T-cell (primary cell): ENCODE measurements at regions of chr15 and their contacts with region 1.

Region 1: DNA sequence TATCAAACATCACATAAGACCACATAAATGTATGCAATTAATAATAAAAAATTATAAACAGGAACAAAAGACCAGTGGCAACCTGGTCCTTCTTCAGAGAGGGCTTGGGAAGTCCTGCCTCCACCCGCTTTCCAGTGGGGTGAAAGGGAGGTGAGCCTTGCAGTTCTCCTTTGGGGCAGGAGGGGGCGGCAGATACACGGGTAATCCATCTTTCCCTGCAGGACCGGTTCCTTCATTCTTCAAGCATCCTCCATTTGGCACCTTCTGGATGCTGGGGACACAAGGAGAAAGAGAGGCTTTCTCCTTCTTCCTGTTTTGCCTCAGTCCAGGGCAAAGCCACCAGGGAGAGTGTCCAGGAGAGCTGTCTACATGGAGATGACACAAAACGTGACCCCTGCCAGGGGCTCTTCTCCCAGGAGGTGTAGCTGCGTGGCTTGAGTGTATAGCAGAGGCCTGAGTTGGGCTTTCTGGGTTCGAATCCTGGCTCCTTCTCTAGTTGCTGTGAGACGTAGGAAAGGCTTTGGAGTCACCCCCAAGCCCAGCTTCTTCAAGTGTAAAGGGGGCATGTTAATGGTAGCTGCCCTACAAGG is 23.2 kb downstream of the RPLP1 start:
- DNase-seq: peak; percentile 25 to 82 (median 64)
- ATAC-seq: peak; percentile 73 to 83 (median 80)
- H3K4me3 ChIP-seq: no peak overlapping the region
- H3K4me3 Mint-ChIP-seq: no peak overlapping the region
- H3K27ac ChIP-seq: no peak overlapping the region
- H3K27ac Mint-ChIP-seq: no peak overlapping the region
- H3K4me1 ChIP-seq: peaks cover 0 to 8% of the 10 kb centered on the region in 2 experiments
- H3K4me1 Mint-ChIP-seq: peaks cover 0 to 5% (median 5%) of the 10 kb centered on the region in 3 donors
- H3K27me3 ChIP-seq: peaks cover 0 to 25% of the 10 kb centered on the region in 2 experiments
- H3K27me3 Mint-ChIP-seq: peaks cover 3 to 5% of the 10 kb centered on the region in 2 donors

Region 2: GRCh38 chr15:69031013-69032001 is 444.6 kb before region 1 on chr15:
- CTCF ChIA-PET with region 1: interaction called in 1 of 2 experiments, 14 read pairs
- POLR2A ChIA-PET with region 1: no interaction called
- DNase-seq: peak in 22 of 35 experiments; percentile 2 to 36 (median 11)
- ATAC-seq: peak; percentile 72 to 81 (median 75)
- H3K4me3 ChIP-seq: peak overlapping the region; percentile 19 to 41
- H3K4me3 Mint-ChIP-seq: peak overlapping the region; percentile 48 to 59 (median 56)
- H3K27ac ChIP-seq: no peak overlapping the region
- H3K27ac Mint-ChIP-seq: no peak overlapping the region
- H3K4me1 ChIP-seq: peaks cover 0 to 10% of the 10 kb centered on the region in 2 experiments
- H3K4me1 Mint-ChIP-seq: peaks cover 0 to 7% (median 5%) of the 10 kb centered on the region in 3 donors
- H3K27me3 ChIP-seq: peaks cover 0 to 43% of the 10 kb centered on the region in 2 experiments
- H3K27me3 Mint-ChIP-seq: peaks cover 14 to 29% of the 10 kb centered on the region in 2 donors

Region 3: GRCh38 chr15:69290346-69291164 is 185.3 kb before region 1 on chr15:
- CTCF ChIA-PET with region 1: no interaction called
- POLR2A ChIA-PET with region 1: no interaction called
- DNase-seq: no peak
- ATAC-seq: no peak
- H3K4me3 ChIP-seq: no peak overlapping the region
- H3K4me3 Mint-ChIP-seq: no peak overlapping the region
- H3K27ac ChIP-seq: no peak overlapping the region
- H3K27ac Mint-ChIP-seq: no peak overlapping the region
- H3K4me1 ChIP-seq: no peaks in the 10 kb centered on the region
- H3K4me1 Mint-ChIP-seq: no peaks in the 10 kb centered on the region
- H3K27me3 ChIP-seq: peaks cover 0 to 5% of the 10 kb centered on the region in 2 experiments
- H3K27me3 Mint-ChIP-seq: peaks cover 5 to 7% of the 10 kb centered on the region in 2 donors

Region 4: DNA sequence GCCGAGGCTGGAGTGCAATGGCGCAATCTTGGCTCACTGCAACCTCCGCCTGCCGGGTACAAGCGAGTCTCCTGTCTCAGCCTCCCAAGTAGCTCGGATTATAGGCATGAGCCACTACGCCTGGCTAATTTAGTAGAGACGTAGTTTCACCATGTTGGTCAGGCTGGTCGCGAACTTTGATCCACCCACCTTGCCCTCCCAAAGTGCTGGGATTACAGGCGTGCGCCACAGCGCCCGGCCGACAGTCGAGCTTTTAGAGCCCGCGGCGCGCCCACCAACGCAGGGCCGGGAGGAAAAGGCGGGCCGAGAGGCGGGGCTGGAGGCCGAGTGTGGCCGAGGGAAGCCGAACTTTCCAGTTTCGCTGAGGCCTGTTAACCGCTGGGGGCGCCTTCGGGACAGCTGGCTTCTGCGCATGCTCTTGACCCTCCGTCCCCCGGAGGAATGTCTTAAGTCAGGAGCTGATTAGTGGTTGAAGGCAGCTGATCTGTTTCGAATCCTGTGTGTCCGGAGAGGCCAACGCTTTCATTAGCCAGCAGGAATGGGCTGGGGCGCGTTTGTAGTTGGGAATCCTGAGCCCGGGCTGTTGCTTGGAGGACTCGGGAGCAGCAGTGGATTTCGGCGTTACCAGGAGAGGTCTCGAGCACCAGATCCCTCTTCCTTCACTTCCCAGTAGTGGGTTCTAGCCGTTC is 13.2 kb before region 1 on chr15:
- CTCF ChIA-PET with region 1: interaction called in 1 of 2 experiments, 17 read pairs
- POLR2A ChIA-PET with region 1: no interaction called
- DNase-seq: peak; percentile 74 to 96 (median 87)
- ATAC-seq: peak; percentile 92 to 99 (median 99)
- H3K4me3 ChIP-seq: peak overlapping the region; percentile 57 to 70
- H3K4me3 Mint-ChIP-seq: peak overlapping the region; percentile 86 to 90 (median 87)
- H3K27ac ChIP-seq: peak overlapping the region; percentile 64
- H3K27ac Mint-ChIP-seq: peak overlapping the region; percentile 90
- H3K4me1 ChIP-seq: peaks cover under 1 to 38% of the 10 kb centered on the region in 2 experiments
- H3K4me1 Mint-ChIP-seq: peaks cover 26 to 54% (median 50%) of the 10 kb centered on the region in 3 donors
- H3K27me3 ChIP-seq: peaks cover 0 to 2% of the 10 kb centered on the region in 2 experiments
- H3K27me3 Mint-ChIP-seq: no peaks in the 10 kb centered on the region

Region 5: GRCh38 chr15:70266412-70267121 is 790.7 kb after region 1 on chr15:
- CTCF ChIA-PET with region 1: no interaction called
- POLR2A ChIA-PET with region 1: interaction called in 1 of 2 experiments, 12 read pairs
- DNase-seq: peak in 10 of 35 experiments; percentile 4 to 56 (median 15)
- ATAC-seq: peak in 2 of 4 experiments; percentile 29 to 31
- H3K4me3 ChIP-seq: no peak overlapping the region
- H3K4me3 Mint-ChIP-seq: peak overlapping the region in 2 of 3 donors; percentile 15 to 44
- H3K27ac ChIP-seq: no peak overlapping the region
- H3K27ac Mint-ChIP-seq: peak overlapping the region in 1 of 2 donors; percentile 28
- H3K4me1 ChIP-seq: peaks cover 10 to 41% of the 10 kb centered on the region in 2 experiments
- H3K4me1 Mint-ChIP-seq: peaks cover 34 to 60% (median 49%) of the 10 kb centered on the region in 3 donors
- H3K27me3 ChIP-seq: peaks cover 0 to 30% of the 10 kb centered on the region in 2 experiments
- H3K27me3 Mint-ChIP-seq: peaks cover 0 to 11% of the 10 kb centered on the region in 2 donors

Region 6: DNA sequence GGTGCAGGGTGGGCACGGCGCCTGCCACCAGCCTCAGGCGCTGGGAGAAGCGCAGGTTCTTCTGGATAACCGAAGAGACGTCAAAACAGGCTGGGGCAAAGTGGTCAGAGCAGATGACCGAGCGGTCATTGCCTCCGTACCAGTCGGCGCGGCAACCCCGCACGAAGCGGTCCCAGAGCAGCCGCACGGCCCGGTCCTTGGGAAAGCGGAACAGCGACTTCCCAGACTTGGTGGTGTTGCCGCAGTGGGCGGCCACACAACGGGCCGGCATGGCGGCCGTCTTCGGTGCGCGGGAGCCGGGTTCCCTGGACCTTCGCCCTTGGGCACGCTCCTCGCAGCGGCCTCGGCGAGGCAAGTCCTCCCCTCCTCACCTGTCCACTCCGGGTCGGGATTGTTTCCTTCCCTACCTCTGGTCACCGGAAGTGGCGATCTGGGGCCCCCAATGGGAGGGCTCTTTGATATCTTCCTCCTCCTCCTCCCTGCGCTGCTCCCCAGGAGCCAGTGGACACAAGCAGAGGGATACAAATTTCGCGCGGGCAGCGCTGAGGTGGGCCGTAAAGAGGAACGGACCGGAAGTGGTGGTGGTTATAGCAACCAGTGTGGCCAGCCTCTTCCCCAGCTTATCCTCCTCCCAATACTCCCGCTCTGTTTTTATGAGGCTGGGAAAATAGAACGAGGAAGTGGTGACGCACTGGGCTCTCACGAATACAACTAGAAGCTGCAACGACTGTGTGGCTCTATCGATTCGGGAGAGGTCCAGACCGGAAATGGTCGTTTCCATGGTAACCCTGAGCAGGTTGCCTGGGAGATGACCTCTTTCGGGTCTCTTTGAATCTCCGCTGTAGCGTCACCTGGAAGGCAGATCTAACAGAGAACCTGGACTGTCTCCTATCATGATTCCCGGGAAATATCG is 1416.4 kb after region 1 on chr15 and contains the starts of genes LRRC49 and THAP10:
- CTCF ChIA-PET with region 1: no interaction called
- POLR2A ChIA-PET with region 1: no interaction called
- DNase-seq: peak in 10 of 35 experiments; percentile 1 to 52 (median 6)
- ATAC-seq: peak in 2 of 4 experiments; percentile 13 to 35
- H3K4me3 ChIP-seq: peak within 1 kb of the TSS; percentile 53
- H3K4me3 Mint-ChIP-seq: peak within 1 kb of the TSS; percentile 75 to 82 (median 78)
- H3K27ac ChIP-seq: peak within 1 kb of the TSS; percentile 32
- H3K27ac Mint-ChIP-seq: no peak within 1 kb of the TSS
- H3K4me1 ChIP-seq: peaks cover 8 to 17% of the 10 kb centered on the region in 2 experiments
- H3K4me1 Mint-ChIP-seq: peaks cover 10 to 14% (median 13%) of the 10 kb centered on the region in 3 donors
- H3K27me3 ChIP-seq: peaks cover 0 to 20% of the 10 kb centered on the region in 2 experiments
- H3K27me3 Mint-ChIP-seq: peaks cover 49 to 55% of the 10 kb centered on the region in 2 donors
- total RNA-seq, gene LRRC49: 0.16 to 0.77 (median 0.51) TPM in 4 of 5 donors, not detected in the other
- total RNA-seq, gene THAP10: 0.33 TPM in 2 of 5 donors, not detected in the others